B cell (primary cell): ENCODE measurements at regions of chr20 and their contacts with region 1.

Region 1: GRCh38 chr20:44866703-44867335 is 18.7 kb upstream of the YWHAB start:
- DNase-seq: no peak
- ATAC-seq: no peak
- H3K4me3 ChIP-seq: no peak overlapping the region
- H3K4me3 Mint-ChIP-seq: peak overlapping the region; percentile 76
- H3K27ac ChIP-seq: no peak overlapping the region
- H3K27ac Mint-ChIP-seq: no peak overlapping the region
- H3K4me1 ChIP-seq: peaks cover 0 to 8% of the 10 kb centered on the region in 2 donors
- H3K4me1 Mint-ChIP-seq: peaks cover 6% of the 10 kb centered on the region
- H3K27me3 ChIP-seq: peaks cover 0 to 7% (median 1%) of the 10 kb centered on the region in 4 experiments
- H3K27me3 Mint-ChIP-seq: peaks cover 3% of the 10 kb centered on the region
- CTCF ChIP-seq: no peak

Region 2: GRCh38 chr20:44115762-44116644 is 750.8 kb before region 1 on chr20:
- CTCF ChIA-PET with region 1: no interaction called
- POLR2A ChIA-PET with region 1: no interaction called
- intact Hi-C with region 1: loop called (anchors 5 kb)
- DNase-seq: no peak
- ATAC-seq: no peak
- H3K4me3 ChIP-seq: no peak overlapping the region
- H3K4me3 Mint-ChIP-seq: no peak overlapping the region
- H3K27ac ChIP-seq: no peak overlapping the region
- H3K27ac Mint-ChIP-seq: no peak overlapping the region
- H3K4me1 ChIP-seq: no peaks in the 10 kb centered on the region
- H3K4me1 Mint-ChIP-seq: peaks cover 3% of the 10 kb centered on the region
- H3K27me3 ChIP-seq: peaks cover 0 to 20% (median 5%) of the 10 kb centered on the region in 4 experiments
- H3K27me3 Mint-ChIP-seq: peaks cover 48% of the 10 kb centered on the region
- CTCF ChIP-seq: no peak

Region 3: GRCh38 chr20:44382641-44383040 is 484.2 kb before region 1 on chr20:
- CTCF ChIA-PET with region 1: interaction called, 13 read pairs
- POLR2A ChIA-PET with region 1: interaction called, 7 read pairs
- intact Hi-C with region 1: loop called (anchors 1 kb)
- DNase-seq: no peak
- ATAC-seq: no peak
- H3K4me3 ChIP-seq: no peak overlapping the region
- H3K4me3 Mint-ChIP-seq: no peak overlapping the region
- H3K27ac ChIP-seq: no peak overlapping the region
- H3K27ac Mint-ChIP-seq: no peak overlapping the region
- H3K4me1 ChIP-seq: no peaks in the 10 kb centered on the region
- H3K4me1 Mint-ChIP-seq: peaks cover under 1% of the 10 kb centered on the region
- H3K27me3 ChIP-seq: peaks cover 0 to 2% (median 0%) of the 10 kb centered on the region in 4 experiments
- H3K27me3 Mint-ChIP-seq: peaks cover 26% of the 10 kb centered on the region
- CTCF ChIP-seq: no peak

Region 4: DNA sequence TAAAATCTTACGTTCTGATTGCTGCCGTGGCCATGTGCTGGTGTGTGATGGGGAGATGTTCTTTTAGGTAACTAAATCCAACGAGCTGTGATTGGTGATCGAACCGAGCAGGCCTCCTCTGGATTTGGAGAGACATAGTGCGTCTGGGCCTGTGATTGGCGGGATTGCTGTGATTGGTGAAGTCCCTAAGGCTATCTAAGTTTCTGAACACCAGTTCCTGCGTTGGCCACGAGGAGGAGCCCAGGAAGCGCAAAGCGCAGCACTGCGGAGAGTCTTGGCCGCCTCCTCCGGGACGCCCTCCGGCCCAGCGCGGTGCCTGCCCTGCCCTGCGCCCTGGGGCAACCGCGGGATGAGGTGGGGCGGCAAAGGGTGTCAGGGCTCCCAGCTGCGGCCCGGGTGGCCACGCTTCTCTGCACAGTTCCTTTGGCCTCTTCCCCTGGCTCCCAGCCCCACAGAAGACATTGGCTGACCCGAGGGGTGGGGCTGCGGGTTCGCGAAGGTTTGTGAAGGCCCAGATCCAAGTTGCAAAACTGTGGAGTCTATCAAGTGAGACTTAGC is 478.3 kb before region 1 on chr20:
- CTCF ChIA-PET with region 1: interaction called, 8 read pairs
- POLR2A ChIA-PET with region 1: interaction called, 7 read pairs
- intact Hi-C with region 1: loop called (anchors 1 kb)
- DNase-seq: peak; percentile 63
- ATAC-seq: peak; percentile 69
- H3K4me3 ChIP-seq: no peak overlapping the region
- H3K4me3 Mint-ChIP-seq: no peak overlapping the region
- H3K27ac ChIP-seq: no peak overlapping the region
- H3K27ac Mint-ChIP-seq: no peak overlapping the region
- H3K4me1 ChIP-seq: peaks cover 3 to 9% of the 10 kb centered on the region in 2 donors
- H3K4me1 Mint-ChIP-seq: peaks cover 5% of the 10 kb centered on the region
- H3K27me3 ChIP-seq: peaks cover 0 to 15% (median 5%) of the 10 kb centered on the region in 4 experiments
- H3K27me3 Mint-ChIP-seq: peaks cover 30% of the 10 kb centered on the region
- CTCF ChIP-seq: peak; percentile 74

Region 5: DNA sequence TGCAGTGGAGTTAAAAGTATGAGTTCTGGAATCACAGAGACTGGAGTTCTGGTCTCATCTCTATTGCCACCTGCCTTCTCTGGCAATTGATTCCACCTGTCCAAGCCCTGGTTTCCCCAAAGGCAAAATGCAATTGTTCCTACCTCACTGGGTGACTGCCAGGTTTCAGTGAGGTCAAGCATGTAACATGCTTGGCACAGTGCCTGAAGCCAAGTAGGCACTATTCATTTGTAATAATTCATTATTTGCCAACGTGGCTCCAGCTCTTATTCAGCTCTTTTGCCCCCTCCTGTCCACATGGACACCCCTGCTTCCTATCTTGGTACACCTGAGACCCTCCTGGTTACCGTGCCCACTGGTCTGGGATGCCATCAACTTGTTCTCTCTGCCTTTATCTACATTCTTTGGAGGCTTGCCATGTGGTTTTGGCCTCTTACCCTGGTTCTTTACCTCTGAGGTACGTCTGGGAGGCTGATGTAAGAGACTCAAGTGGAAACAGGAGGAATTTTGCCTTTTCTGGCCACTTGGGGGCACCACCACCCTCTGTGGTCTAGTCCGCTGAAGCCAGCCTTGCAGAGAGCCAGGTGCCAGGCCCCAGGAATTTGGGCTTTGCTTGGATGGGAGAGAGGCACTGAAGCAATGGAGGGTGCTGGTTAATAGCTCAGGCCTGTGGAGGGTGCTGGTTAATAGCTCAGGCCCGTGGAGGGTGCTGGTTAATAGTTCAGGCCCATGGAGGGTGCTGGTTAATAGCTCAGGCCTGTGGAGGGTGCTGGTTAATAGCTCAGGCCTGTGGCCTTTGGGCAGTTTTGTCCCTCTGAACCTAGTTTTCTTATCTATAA is 119.4 kb before region 1 on chr20:
- CTCF ChIA-PET with region 1: interaction called, 12 read pairs
- POLR2A ChIA-PET with region 1: no interaction called
- intact Hi-C with region 1: loop called (anchors 1 kb)
- DNase-seq: peak; percentile 66
- ATAC-seq: peak; percentile 44
- H3K4me3 ChIP-seq: no peak overlapping the region
- H3K4me3 Mint-ChIP-seq: peak overlapping the region; percentile 60
- H3K27ac ChIP-seq: no peak overlapping the region
- H3K27ac Mint-ChIP-seq: no peak overlapping the region
- H3K4me1 ChIP-seq: peaks cover 7 to 15% of the 10 kb centered on the region in 2 donors
- H3K4me1 Mint-ChIP-seq: peaks cover 16% of the 10 kb centered on the region
- H3K27me3 ChIP-seq: peaks cover 0 to 42% (median 20%) of the 10 kb centered on the region in 4 experiments
- H3K27me3 Mint-ChIP-seq: peaks cover 34% of the 10 kb centered on the region
- CTCF ChIP-seq: peak; percentile 66